ENCODE measurements at regions of chr22 and their contacts with region 1.

Region 1: GRCh38 chr22:30289134-30289979 is at the start of gene CASTOR1:
- DNase-seq: peak; percentile 94
- H3K4me3 Mint-ChIP-seq: peak within 1 kb of the TSS; percentile 77
- H3K27ac Mint-ChIP-seq: peak within 1 kb of the TSS; percentile 81
- H3K4me1 Mint-ChIP-seq: peaks cover 61% of the 10 kb centered on the region
- H3K27me3 Mint-ChIP-seq: no peaks in the 10 kb centered on the region
- total RNA-seq, gene CASTOR1: 14.2 to 14.6 TPM

Region 2: DNA sequence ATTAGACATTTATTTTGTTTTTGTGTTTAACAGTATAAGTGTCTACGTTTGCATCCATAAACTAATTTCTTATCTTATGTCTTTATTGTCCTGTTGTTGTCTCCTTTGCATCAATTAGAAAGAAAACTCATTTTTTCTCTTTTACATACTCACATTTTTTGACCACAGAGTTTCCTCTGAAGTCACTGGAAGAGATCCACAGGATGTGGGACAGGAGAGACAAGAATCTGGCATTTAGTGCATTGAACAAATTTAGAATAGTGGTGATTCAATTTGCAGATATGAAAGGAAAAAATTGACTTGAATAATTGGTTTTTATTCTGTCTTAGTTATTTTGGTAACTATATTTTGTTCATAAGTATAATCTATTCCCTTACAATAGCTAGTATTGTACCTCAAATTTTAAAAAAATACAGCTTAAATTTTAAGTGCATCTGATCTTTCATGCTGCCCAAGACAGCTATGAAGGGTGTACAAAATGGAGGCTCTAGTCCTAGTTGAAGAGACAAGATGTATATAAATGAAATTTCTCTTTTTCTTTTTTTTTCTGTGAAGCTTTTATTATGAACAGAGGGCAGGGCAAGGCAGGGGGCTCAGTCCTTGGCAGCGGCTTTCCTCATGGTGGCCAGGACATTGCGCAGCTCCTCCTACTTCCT is 184.7 kb before region 1 on chr22:
- CTCF ChIA-PET with region 1: interaction called, 119 read pairs
- POLR2A ChIA-PET with region 1: interaction called, 8 read pairs
- DNase-seq: peak; percentile 29
- H3K4me3 Mint-ChIP-seq: peak overlapping the region; percentile 51
- H3K27ac Mint-ChIP-seq: peak overlapping the region; percentile 87
- H3K4me1 Mint-ChIP-seq: peaks cover 74% of the 10 kb centered on the region
- H3K27me3 Mint-ChIP-seq: no peaks in the 10 kb centered on the region

Region 3: GRCh38 chr22:30205281-30206115 is 83.9 kb before region 1 on chr22:
- CTCF ChIA-PET with region 1: no interaction called
- POLR2A ChIA-PET with region 1: no interaction called
- DNase-seq: no peak
- H3K4me3 Mint-ChIP-seq: no peak overlapping the region
- H3K27ac Mint-ChIP-seq: no peak overlapping the region
- H3K4me1 Mint-ChIP-seq: peaks cover 20% of the 10 kb centered on the region
- H3K27me3 Mint-ChIP-seq: no peaks in the 10 kb centered on the region

Region 4: DNA sequence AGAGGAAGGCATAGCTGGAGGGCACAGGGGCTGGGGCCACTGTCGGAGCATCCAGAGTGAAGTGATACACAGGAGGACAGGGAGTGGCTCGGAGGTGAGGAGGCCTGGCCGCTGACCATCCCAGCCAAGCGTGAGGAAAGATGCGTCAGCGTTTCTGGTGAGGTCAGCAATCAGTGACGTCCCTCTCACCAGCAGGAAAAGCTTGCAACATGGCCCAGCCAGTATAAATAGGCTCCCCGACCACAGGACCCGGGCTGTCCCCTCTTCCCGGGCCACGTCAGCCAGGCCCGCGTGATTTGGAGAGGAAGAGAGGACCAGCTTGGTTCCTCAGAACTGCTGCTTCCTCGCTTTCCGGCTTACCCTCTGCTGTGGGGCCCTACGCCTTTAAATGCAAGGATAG is 18.5 kb before region 1 on chr22:
- CTCF ChIA-PET with region 1: interaction called, 50 read pairs
- POLR2A ChIA-PET with region 1: interaction called, 253 read pairs
- DNase-seq: no peak
- H3K4me3 Mint-ChIP-seq: no peak overlapping the region
- H3K27ac Mint-ChIP-seq: no peak overlapping the region
- H3K4me1 Mint-ChIP-seq: peaks cover 68% of the 10 kb centered on the region
- H3K27me3 Mint-ChIP-seq: no peaks in the 10 kb centered on the region

Region 5: DNA sequence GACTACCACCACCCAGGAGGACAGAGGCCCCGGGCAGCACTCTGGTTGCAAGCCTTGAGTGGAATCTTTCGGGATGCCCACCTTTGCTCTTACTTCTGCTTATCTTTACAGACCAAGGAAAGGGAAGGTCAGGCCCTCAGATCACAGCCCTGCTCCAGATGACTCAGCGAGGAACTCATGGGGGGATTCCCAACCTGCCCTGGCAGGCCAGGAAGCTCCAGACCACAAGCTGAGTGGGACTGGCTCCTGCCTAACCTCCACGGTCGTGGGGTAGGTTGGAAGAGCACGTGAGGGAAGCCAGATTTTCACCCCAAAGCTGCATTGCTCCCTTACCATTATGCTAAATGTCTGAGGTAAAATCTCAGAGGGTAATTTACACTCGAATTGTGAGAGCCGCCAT is 25.6 kb after region 1 on chr22:
- CTCF ChIA-PET with region 1: interaction called, 11 read pairs
- POLR2A ChIA-PET with region 1: interaction called, 5 read pairs
- DNase-seq: peak; percentile 38
- H3K4me3 Mint-ChIP-seq: no peak overlapping the region
- H3K27ac Mint-ChIP-seq: peak overlapping the region; percentile 50
- H3K4me1 Mint-ChIP-seq: peaks cover 93% of the 10 kb centered on the region
- H3K27me3 Mint-ChIP-seq: no peaks in the 10 kb centered on the region

Region 6: DNA sequence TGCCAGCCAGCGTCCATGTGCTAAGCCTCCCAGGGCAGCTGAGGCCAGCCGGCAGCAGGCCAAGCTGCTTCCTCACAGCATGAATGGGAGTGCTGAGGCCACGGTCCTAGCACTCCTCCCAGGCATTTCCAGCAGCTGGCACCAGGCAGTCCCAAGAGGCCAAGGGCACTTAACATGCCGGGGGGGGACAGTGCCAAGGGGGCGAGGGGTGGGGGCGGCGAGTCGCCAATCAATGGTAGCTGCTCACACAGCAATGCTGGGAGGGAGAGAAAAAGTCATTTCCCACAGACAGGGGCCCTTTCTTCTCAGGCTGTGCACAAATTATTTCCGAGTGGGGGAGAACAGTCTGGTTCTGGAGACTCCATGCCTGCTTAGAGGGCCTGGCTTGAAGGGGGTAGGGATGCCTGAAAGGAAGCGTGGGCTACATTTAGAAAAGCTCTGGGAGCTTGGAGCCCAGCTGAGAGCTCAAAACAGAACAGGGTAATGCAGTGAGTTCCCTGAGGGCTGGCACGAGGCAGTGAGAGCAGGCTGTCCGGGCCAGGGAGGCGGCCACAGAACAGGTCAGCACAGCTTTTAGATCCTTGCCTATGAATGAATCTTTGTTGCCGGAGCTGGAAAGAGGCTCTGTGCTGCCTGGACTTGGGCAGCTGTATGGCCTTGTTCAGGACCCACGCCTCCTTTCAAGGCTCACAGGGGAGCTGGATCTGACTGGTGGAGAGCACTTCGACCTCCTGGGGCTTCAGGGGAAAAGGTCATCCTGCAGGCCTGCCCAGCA is 51.7 kb after region 1 on chr22:
- CTCF ChIA-PET with region 1: interaction called, 24 read pairs
- POLR2A ChIA-PET with region 1: interaction called, 4 read pairs
- DNase-seq: no peak
- H3K4me3 Mint-ChIP-seq: no peak overlapping the region
- H3K27ac Mint-ChIP-seq: no peak overlapping the region
- H3K4me1 Mint-ChIP-seq: peaks cover 24% of the 10 kb centered on the region
- H3K27me3 Mint-ChIP-seq: no peaks in the 10 kb centered on the region

Region 7: DNA sequence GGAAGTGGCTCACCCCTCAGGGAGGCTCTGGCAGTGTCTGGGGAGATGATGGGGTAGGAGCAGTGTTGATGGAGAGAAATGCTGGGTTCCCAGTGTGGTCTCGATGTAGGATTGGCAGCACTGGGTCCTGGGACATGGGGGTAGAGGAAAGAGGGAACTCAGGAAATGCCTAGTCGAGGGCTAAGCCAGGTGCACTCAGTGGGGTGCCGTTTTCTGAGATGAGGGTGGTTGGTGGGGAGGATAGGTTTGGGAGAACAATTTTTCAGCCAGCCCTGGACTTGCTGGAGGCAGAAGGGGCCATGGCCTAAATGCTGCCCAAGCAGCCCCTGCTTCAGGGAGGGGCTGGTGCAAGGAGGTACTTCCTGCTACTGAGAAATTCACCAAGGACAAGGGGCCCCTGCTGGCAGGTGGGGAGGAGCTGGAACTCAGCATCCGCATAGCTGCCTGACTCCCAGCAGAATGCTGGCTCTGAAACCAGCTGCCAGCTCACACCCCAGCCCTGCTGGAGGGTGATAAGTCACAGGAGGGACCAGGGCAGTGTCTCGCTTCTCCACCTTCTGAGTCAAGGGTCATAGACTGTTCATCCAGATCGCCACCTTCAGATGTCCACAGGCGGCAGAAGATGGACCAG is 73.4 kb after region 1 on chr22:
- CTCF ChIA-PET with region 1: interaction called, 37 read pairs
- POLR2A ChIA-PET with region 1: interaction called, 4 read pairs
- DNase-seq: no peak
- H3K4me3 Mint-ChIP-seq: no peak overlapping the region
- H3K27ac Mint-ChIP-seq: no peak overlapping the region
- H3K4me1 Mint-ChIP-seq: peaks cover 4% of the 10 kb centered on the region
- H3K27me3 Mint-ChIP-seq: no peaks in the 10 kb centered on the region

Region 8: DNA sequence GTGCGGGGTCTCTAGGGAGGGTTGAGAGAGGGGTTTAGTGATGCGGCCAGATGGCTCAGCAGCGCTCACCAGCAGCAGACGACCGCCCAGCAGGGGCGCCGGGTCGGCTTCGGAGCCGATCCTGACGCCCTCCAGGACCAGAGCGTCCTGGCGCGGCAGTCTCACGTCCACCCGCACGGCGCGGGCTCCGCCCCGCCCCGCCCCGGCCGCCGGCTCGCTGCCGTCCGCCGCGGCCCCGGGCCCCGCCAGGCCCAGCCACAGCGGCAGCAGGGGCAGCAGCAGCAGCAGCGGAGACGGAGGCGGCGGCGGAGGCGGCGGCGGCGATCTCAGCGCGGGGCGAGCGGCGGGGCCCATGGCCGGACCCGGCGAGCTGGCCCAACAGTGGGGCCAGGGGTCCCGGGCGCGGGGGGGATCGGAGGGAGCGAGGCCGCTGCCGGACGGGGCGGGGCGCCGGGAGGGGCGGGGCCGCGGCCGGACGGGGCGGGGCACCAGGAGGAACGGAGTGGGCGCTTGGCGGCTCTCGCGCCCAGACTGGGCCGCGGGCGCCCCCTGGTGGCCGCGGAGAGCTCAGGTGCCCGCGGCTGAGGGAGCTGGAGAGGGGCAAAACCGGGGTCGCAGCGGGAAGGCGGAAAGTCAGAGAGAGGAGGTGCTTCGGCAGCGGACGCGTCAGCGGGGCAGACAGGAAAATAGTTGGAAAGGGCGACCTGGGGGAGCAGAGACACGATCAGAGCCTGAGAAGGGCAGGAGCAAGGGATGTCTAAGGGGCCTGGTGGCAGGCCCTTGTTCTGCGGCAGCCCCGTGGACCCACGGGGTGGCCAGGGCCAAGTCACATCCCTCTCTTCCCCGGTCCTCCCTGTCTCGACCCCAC is 97.8 kb after region 1 on chr22 and contains the start of gene RNF215:
- CTCF ChIA-PET with region 1: interaction called, 185 read pairs
- POLR2A ChIA-PET with region 1: interaction called, 66 read pairs
- DNase-seq: peak; percentile 82
- H3K4me3 Mint-ChIP-seq: peak within 1 kb of the TSS; percentile 77
- H3K27ac Mint-ChIP-seq: peak within 1 kb of the TSS; percentile 52
- H3K4me1 Mint-ChIP-seq: peaks cover 36% of the 10 kb centered on the region
- H3K27me3 Mint-ChIP-seq: peaks cover 2% of the 10 kb centered on the region
- total RNA-seq, gene RNF215: 12.2 to 13.3 TPM

Region 9: GRCh38 chr22:30763815-30764686 is 474.7 kb after region 1 on chr22:
- CTCF ChIA-PET with region 1: no interaction called
- POLR2A ChIA-PET with region 1: no interaction called
- DNase-seq: peak; percentile 67
- H3K4me3 Mint-ChIP-seq: no peak overlapping the region
- H3K27ac Mint-ChIP-seq: no peak overlapping the region
- H3K4me1 Mint-ChIP-seq: no peaks in the 10 kb centered on the region
- H3K27me3 Mint-ChIP-seq: no peaks in the 10 kb centered on the region

Measured in activated CD4-positive, alpha-beta memory T cell treated with anti-CD3 and anti-CD28 coated beads, Interleukin-2, amount 10 ng/mL, durations not matched to agents 7 days and 5 days (primary cell).